ENCODE measurements at regions of chr12 and their contacts with region 1.

Region 1: GRCh38 chr12:75334384-75335030 is at the start of gene GLIPR1L1:
- DNase-seq: peak; percentile 74 to 97 (median 91)

Region 2: GRCh38 chr12:75225546-75225945 is 109.0 kb before region 1 on chr12:
- intact Hi-C with region 1: no loop called
- DNase-seq: no peak

Region 3: DNA sequence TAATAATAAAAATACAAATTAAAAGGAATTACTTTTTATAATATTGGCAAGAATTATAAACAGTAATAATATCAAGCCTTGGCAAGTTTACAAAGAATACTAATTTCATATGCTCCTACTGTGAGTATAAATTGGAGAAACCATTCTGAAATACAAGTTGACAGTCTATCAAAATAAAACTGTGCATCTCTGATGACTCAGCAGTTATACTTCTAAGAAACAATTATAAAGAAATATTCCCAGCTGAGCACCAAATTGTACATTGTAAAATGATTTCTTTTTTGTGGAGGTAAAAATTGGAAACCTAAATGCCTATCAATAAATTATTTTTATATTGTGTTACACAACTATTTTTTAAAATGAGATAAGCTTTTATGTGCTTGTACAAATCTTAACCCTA is 89.4 kb before region 1 on chr12:
- intact Hi-C with region 1: no loop called
- DNase-seq: no peak

Region 4: GRCh38 chr12:75390899-75391538 is 56.5 kb after region 1 on chr12 and contains the start of gene GLIPR1L2:
- intact Hi-C with region 1: loop called (anchors 1 kb)
- DNase-seq: peak; percentile 90 to 98 (median 96)

Region 5: DNA sequence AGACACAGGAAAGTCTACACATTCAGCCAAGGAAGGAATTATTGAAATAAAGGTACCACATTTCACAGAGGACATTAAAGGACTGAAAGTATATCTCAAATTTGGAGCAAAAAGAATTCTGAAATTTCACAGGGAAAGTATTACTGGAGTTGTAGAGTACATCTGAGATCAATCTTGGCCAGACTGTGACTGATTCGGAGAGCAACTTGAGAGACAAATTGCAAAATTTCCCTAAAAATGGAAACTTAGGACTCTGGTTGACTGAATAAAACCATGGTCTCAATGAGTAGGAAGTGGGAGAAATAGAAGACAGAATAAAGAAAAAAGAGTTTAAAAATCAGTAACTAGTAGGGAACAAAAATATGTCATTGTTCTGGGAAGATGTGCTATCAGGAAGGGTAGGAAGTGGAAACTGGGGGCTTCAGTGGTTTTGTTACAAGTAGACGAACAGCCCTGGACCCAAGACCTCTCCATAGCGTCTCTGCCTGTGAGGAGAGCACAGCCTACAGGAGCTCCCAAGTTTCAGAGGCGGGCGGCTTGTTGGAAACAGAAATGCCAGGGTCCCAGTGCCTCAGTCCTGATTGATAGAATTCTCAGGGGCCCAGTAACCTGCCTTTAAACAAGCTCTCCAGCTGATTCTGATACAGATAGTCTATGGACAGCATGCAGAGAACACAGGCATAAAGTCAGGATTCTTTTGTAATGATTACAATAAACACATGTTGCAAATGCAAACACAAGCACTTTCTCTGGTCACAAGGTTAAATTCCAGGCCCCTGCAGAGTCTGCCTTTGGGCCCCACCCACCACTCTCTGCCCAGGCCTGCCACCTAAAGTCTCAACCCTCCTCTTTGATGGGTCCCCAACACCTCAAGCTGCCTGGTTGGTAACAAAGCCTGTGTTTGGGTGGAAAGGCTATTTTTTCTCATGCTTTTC is 950.6 kb after region 1 on chr12:
- intact Hi-C with region 1: no loop called
- DNase-seq: no peak

Measured in head of caudate nucleus (tissue), 42 donors.